MCF 10A (cell line): ENCODE measurements at regions of chr7 and their contacts with region 1.

Region 1: GRCh38 chr7:148884299-148885022 is 370 bp upstream of the EZH2 start:
- DNase-seq: peak; percentile 92
- H3K4me3 Mint-ChIP-seq: peak overlapping the region; percentile 94
- H3K27ac Mint-ChIP-seq: peak overlapping the region; percentile 76
- H3K4me1 Mint-ChIP-seq: peaks cover 12% of the 10 kb centered on the region
- H3K27me3 Mint-ChIP-seq: no peaks in the 10 kb centered on the region
- CTCF ChIP-seq: no peak

Region 2: DNA sequence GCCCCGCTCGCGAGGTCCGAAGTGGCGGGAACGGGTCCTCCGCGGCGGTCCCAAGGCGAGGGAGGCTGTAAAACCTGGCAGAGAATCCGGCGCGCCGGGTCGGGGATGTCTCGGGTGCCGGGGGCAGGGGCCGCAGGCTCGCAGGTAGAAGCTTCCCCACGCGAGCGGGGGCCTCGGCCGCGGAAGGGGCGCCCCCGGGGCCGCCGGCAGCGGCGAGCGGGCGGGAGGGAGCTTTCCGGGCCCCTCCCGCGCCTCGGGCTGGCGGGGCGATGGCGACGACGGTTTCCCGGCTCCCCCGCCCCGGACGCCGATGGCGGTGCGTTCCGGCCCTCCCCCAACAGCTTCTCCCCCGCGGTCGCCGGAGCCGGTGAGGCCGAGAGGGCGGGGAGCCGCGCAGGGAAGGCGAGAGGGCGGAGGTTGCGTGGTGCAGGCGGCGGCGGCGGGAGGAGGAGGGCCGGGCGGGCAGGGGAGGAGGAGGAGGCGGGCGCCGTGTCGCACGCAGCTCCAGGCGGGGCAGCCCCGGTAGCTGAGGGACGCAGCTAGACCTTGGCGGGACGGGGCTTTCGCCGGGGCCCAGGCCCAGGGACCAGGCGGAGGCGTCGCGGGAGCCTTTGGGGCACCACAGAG is 186.0 kb before region 1 on chr7 and contains the start of gene CUL1:
- CTCF ChIA-PET with region 1: interaction called, 3 read pairs
- POLR2A ChIA-PET with region 1: interaction called, 10 read pairs
- intact Hi-C with region 1: loop called (anchors 10 kb)
- DNase-seq: peak; percentile 83
- H3K4me3 Mint-ChIP-seq: peak within 1 kb of the TSS; percentile 85
- H3K27ac Mint-ChIP-seq: peak within 1 kb of the TSS; percentile 71
- H3K4me1 Mint-ChIP-seq: peaks cover 46% of the 10 kb centered on the region
- H3K27me3 Mint-ChIP-seq: no peaks in the 10 kb centered on the region
- CTCF ChIP-seq: no peak
- total RNA-seq, gene CUL1: 41.2 and 49.2 TPM in 2 replicates

Region 3: DNA sequence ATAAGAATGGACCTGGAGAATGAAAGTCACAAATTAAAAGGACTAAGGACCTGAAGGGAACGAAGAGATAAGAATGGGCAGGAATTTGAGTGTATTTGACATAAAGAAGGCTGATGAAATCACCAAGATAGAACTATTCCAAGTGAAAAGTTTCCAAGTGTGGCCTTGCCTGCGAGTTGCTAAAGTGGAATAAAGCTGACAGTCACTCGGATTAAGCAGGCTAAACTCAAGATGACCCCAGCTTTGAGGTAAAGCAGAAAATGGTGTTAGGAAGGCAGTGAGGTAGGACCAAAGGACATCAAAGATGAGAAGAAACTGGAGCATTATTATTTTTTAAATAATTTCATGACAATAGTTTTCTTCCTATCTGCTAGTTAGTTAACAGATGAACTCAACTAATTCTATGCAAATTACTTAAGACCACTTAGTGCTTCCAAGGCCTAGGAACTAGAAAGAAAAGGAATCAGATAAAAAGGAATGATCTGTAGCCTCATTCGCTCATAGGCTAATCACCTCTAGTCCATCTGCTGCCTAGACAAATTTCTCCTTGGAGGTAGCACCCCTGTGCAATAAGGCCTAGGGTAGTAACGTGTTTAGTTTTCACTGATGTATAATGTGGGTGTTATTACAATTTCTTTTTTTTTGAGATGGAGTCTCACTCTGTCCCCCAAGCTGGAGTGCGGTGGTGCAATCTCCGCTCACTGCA is 34.9 kb before region 1 on chr7:
- CTCF ChIA-PET with region 1: interaction called, 8 read pairs
- POLR2A ChIA-PET with region 1: interaction called, 12 read pairs
- intact Hi-C with region 1: no loop called
- DNase-seq: no peak
- H3K4me3 Mint-ChIP-seq: no peak overlapping the region
- H3K27ac Mint-ChIP-seq: peak overlapping the region; percentile 7
- H3K4me1 Mint-ChIP-seq: peaks cover 14% of the 10 kb centered on the region
- H3K27me3 Mint-ChIP-seq: no peaks in the 10 kb centered on the region
- CTCF ChIP-seq: no peak

Region 4: DNA sequence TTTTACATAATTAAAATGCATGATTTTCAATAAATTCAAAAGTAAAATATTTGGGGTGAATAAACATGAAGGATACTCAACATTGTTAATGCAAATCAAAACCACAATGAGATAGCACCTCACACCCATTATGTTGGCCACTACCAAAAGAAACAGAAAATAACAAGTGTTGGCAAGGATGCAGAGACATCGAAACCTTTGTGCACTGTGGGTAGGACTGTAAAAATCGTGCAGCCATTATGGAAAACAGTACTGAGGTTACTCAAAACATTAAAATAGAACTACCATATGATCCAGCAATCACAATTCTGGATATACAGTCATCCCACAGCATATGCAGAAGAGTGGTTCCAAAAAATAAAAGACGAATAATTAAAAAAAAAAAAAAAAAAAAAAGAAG is 13.4 kb before region 1 on chr7:
- CTCF ChIA-PET with region 1: interaction called, 4 read pairs
- POLR2A ChIA-PET with region 1: interaction called, 23 read pairs
- intact Hi-C with region 1: no loop called
- DNase-seq: no peak
- H3K4me3 Mint-ChIP-seq: no peak overlapping the region
- H3K27ac Mint-ChIP-seq: no peak overlapping the region
- H3K4me1 Mint-ChIP-seq: no peaks in the 10 kb centered on the region
- H3K27me3 Mint-ChIP-seq: no peaks in the 10 kb centered on the region
- CTCF ChIP-seq: no peak